B cell (primary cell): ENCODE measurements at regions of chr2 and their contacts with region 1.

Region 1: DNA sequence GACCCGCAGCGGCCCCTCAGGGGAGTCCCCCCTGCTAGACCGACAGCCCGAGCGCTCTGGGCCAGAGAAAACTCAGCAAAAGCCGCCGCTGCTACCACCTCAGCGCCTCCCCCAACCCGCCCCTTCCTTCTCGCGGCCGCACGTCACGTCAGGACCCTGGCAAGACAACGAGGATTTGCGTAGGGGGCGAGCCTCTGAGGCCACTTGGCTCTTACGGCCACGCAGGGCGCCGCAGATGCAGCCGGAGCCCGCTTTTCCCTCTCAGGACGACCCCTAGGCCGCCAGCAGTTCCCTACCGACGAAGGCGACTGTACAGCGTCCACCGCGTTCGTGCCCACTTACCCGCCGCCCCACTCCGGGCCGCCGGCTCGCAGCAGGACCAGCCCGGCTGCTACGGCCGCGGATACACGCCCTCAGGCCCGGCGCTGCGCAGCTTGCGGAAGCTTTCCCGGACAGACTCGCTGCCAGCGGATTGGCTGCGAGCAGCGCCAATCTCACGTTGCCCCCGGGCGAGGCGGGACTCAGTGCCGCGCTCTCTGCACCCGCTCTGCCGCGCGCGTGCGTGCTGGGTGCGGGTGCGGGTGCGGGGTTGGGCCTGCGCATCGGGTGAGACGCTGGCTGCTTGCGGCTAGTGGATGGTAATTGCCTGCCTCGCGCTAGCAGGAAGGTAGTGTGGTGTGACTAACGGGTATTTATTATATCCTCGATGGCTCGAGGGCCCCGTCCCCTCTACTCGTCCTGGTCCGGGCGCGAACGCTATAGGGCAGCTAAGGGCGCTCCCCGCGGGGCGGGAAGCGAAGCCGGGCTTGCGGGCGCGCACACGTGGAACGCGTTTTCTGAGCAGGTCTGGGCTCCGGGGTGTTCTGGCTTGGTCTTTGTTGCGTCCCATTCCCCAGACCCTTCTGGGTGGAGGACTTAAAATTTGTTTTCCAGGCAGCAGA is at the starts of genes ORMDL1 and PMS1:
- DNase-seq: peak; percentile 98
- ATAC-seq: peak; percentile 90
- H3K4me3 ChIP-seq: peak within 1 kb of the TSS; percentile 66 to 96 (median 79)
- H3K4me3 Mint-ChIP-seq: peak within 1 kb of the TSS; percentile 96
- H3K27ac ChIP-seq: peak within 1 kb of the TSS; percentile 83 to 84
- H3K27ac Mint-ChIP-seq: peak within 1 kb of the TSS; percentile 98
- H3K4me1 ChIP-seq: peaks cover 14 to 21% of the 10 kb centered on the region in 2 donors
- H3K4me1 Mint-ChIP-seq: peaks cover 42% of the 10 kb centered on the region
- H3K27me3 ChIP-seq: no peaks in the 10 kb centered on the region
- H3K27me3 Mint-ChIP-seq: no peaks in the 10 kb centered on the region
- CTCF ChIP-seq: no peak
- total RNA-seq, gene ORMDL1: 166 and 170 TPM in 2 replicates
- total RNA-seq, gene PMS1: 43.6 and 44.2 TPM in 2 replicates

Region 2: DNA sequence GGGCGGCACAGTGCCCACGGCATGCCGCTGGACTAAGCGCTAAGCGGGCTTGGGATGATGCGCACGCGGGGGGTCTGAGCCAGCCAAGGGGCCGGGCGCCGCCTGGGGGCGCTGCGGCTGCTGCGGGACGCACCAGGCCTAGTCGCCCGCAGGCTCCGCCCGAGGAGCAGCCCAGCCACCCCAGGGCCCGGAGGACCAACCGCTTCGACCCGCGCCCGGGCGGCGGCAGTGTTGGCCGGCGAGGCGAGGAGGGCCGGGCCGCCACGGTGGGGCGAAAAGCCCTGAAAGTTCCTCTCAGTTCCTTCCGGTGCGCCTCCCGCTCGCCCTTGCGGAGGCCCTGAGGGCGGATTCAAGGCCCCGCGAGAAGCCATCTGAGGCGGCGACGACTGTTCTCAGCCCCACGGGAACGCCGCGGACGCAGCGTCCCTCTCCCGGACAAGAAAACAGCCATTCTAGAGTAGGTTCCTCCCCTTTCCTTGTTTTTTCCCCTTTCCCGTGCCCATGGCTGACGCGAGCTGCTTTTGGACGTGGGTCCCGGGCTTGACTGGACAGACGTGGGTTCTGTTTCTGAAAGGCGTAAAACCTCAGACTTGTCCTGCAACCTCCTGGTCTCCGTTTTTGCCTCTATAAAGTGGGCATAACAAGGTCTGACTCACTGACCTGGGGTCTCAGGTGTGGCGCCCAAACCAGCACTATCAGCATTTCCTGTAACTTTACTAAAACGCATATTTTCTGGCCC is 109.7 kb before region 1 on chr2 and contains the start of gene ANKAR:
- CTCF ChIA-PET with region 1: no interaction called
- POLR2A ChIA-PET with region 1: no interaction called
- intact Hi-C with region 1: loop called (anchors 1 kb)
- DNase-seq: peak; percentile 94
- ATAC-seq: peak; percentile 97
- H3K4me3 ChIP-seq: peak within 1 kb of the TSS; percentile 72 to 92 (median 85)
- H3K4me3 Mint-ChIP-seq: peak within 1 kb of the TSS; percentile 97
- H3K27ac ChIP-seq: peak within 1 kb of the TSS; percentile 93 to 98
- H3K27ac Mint-ChIP-seq: peak within 1 kb of the TSS; percentile 99
- H3K4me1 ChIP-seq: peaks cover 17 to 26% of the 10 kb centered on the region in 2 donors
- H3K4me1 Mint-ChIP-seq: peaks cover 38% of the 10 kb centered on the region
- H3K27me3 ChIP-seq: no peaks in the 10 kb centered on the region
- H3K27me3 Mint-ChIP-seq: no peaks in the 10 kb centered on the region
- CTCF ChIP-seq: peak; percentile 96
- total RNA-seq, gene ANKAR: 23.4 and 24.8 TPM in 2 replicates

Region 3: DNA sequence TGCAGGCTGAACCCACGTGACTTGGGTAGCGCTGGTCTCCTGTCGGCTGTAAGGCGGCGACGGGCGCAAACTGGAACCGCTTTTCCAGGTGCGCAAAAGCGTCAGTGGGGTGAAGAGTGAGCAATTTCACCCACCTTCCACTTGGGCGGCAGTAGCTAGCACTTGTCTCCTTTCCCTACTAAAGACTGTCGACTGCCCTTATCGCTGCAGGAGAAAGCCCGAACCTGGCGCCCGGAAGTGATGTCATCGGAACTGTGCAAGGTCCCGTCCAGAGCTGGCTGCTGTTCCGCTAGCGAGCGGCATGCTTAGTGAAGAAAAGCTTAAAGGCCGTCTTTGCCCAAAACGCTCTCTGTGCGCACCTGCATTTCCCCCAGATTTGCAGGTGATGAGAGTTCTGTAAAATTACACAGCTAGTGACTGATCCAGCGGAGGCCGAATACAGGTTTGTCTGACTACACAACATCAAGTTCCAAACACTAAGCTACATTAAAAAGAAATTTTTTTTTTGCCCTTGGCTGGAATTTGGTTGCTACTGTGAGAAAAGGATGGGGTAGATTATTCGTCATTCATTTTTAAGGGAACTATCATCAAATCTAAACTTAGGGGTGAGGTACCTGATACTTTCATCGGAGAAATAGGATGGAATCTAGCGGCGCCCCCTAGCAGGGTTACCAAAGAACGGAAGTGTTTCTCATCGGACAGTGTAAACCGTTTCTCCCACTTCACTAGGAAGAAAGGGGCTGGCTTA is 21.5 kb before region 1 on chr2 and contains the start of gene OSGEPL1:
- CTCF ChIA-PET with region 1: interaction called, 28 read pairs
- POLR2A ChIA-PET with region 1: interaction called, 32 read pairs
- intact Hi-C with region 1: loop called (anchors 1 kb)
- DNase-seq: peak; percentile 96
- ATAC-seq: peak; percentile 92
- H3K4me3 ChIP-seq: peak within 1 kb of the TSS; percentile 67 to 100 (median 95)
- H3K4me3 Mint-ChIP-seq: peak within 1 kb of the TSS; percentile 98
- H3K27ac ChIP-seq: peak within 1 kb of the TSS; percentile 77 to 89
- H3K27ac Mint-ChIP-seq: peak within 1 kb of the TSS; percentile 98
- H3K4me1 ChIP-seq: peaks cover 9 to 10% of the 10 kb centered on the region in 2 donors
- H3K4me1 Mint-ChIP-seq: peaks cover 6% of the 10 kb centered on the region
- H3K27me3 ChIP-seq: no peaks in the 10 kb centered on the region
- H3K27me3 Mint-ChIP-seq: no peaks in the 10 kb centered on the region
- CTCF ChIP-seq: peak; percentile 73
- total RNA-seq, gene OSGEPL1: 11.2 and 12.6 TPM in 2 replicates

Region 4: DNA sequence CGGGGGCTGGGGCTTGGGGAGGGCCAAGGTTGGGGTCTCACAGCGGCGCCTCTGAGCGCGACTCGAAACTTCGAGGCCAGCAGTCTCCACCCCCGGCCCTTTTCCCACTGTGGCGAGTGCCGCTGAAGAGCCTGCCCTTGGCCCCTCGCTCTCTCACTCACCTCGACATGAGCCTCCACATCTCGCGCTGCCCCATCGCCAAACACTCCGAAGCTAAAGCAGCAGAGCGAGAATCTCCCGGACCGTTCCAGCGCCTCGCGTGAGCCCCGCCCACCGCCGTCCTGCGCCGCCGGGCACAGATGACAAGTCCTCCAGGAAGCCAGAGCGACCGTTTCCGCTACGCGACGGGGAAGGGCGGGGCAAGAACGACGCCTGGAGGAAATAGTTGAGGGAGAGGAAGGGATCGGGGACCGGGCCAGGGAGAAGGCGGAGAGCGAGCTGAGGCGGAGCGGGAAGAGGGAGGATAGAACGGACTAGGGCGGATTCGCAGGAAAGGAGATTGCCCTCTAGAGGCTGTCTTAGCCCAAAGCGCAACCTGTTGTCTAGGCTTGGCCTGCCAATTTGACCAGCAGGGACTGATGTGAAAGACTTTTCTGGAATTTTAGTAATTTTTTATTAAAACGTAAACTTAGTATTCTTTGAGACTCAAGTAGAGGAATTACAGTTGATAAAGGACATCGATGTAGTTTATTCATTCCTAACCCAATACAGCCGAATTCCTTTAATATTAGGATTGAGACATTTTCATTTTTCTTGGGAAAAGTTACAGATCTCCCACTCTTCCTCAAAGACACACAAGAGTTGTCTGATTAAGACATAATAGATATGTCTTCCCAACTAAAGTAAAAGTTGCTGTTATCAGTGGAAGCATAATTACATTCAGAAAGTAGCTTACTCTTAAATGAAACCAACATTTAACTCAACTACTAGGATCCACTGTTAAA is 535.6 kb after region 1 on chr2 and contains the start of gene HIBCH:
- CTCF ChIA-PET with region 1: no interaction called
- POLR2A ChIA-PET with region 1: no interaction called
- intact Hi-C with region 1: loop called (anchors 1 kb)
- DNase-seq: peak; percentile 85
- ATAC-seq: peak; percentile 94
- H3K4me3 ChIP-seq: peak within 1 kb of the TSS; percentile 73 to 87 (median 79)
- H3K4me3 Mint-ChIP-seq: peak within 1 kb of the TSS; percentile 95
- H3K27ac ChIP-seq: peak within 1 kb of the TSS; percentile 80 to 84
- H3K27ac Mint-ChIP-seq: peak within 1 kb of the TSS; percentile 95
- H3K4me1 ChIP-seq: peaks cover 20 to 26% of the 10 kb centered on the region in 2 donors
- H3K4me1 Mint-ChIP-seq: peaks cover 42% of the 10 kb centered on the region
- H3K27me3 ChIP-seq: no peaks in the 10 kb centered on the region
- H3K27me3 Mint-ChIP-seq: peaks cover 8% of the 10 kb centered on the region
- CTCF ChIP-seq: peak; percentile 77
- total RNA-seq, gene HIBCH: 30.2 and 36.9 TPM in 2 replicates

Region 5: GRCh38 chr2:191013932-191014652 is 1229.9 kb after region 1 on chr2 and contains the start of gene STAT1:
- CTCF ChIA-PET with region 1: no interaction called
- POLR2A ChIA-PET with region 1: no interaction called
- intact Hi-C with region 1: loop called (anchors 5 kb)
- DNase-seq: peak; percentile 96
- ATAC-seq: peak; percentile 93
- H3K4me3 ChIP-seq: peak within 1 kb of the TSS; percentile 81 to 96 (median 92)
- H3K4me3 Mint-ChIP-seq: no peak within 1 kb of the TSS
- H3K27ac ChIP-seq: peak within 1 kb of the TSS; percentile 84 to 93
- H3K27ac Mint-ChIP-seq: no peak within 1 kb of the TSS
- H3K4me1 ChIP-seq: peaks cover 35 to 42% of the 10 kb centered on the region in 2 donors
- H3K4me1 Mint-ChIP-seq: peaks cover 23% of the 10 kb centered on the region
- H3K27me3 ChIP-seq: no peaks in the 10 kb centered on the region
- H3K27me3 Mint-ChIP-seq: no peaks in the 10 kb centered on the region
- CTCF ChIP-seq: no peak
- total RNA-seq, gene STAT1: 50.9 and 53.8 TPM in 2 replicates